Cardiac septum (tissue), 1 donor: ENCODE measurements at regions of chr6 and their contacts with region 1.

Region 1: DNA sequence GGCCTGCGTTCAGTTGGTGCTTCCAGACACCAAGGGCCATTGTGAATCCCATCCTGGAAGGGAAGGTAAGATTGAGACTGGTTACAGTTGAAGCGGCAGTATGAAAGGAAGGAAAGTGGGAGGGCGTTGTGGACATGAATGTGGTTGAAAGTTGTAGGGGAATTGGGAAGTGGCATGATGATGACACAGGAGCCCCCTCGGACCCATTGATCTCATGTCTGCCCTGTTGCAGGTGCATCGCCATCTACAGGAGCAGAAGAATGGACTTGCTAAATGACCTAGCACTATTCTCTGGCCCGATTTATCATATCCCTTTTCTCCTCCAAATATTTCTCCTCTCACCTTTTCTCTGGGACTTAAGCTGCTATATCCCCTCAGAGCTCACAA is 5.5 kb downstream of the HLA-DQA1 start:
- DNase-seq: no peak

Region 2: GRCh38 chr6:32744776-32745175 is 102.1 kb after region 1 on chr6:
- intact Hi-C with region 1: loop called (anchors 5 kb)
- DNase-seq: no peak